CD8-positive, alpha-beta T cell (primary cell): ENCODE measurements at regions of chrX and their contacts with region 1.

Region 1: GRCh38 chrX:132488819-132489577 is at the start of gene MBNL3:
- DNase-seq: peak; percentile 47 to 85 (median 70)
- ATAC-seq: peak; percentile 71
- H3K4me3 ChIP-seq: peak within 1 kb of the TSS; percentile 61 to 77
- H3K4me3 Mint-ChIP-seq: peak within 1 kb of the TSS; percentile 95
- H3K27ac ChIP-seq: peak within 1 kb of the TSS; percentile 66 to 83
- H3K27ac Mint-ChIP-seq: peak within 1 kb of the TSS; percentile 96
- H3K4me1 ChIP-seq: peaks cover 34% of the 10 kb centered on the region
- H3K4me1 Mint-ChIP-seq: peaks cover 52% of the 10 kb centered on the region
- H3K27me3 ChIP-seq: no peaks in the 10 kb centered on the region
- H3K27me3 Mint-ChIP-seq: no peaks in the 10 kb centered on the region
- CTCF ChIP-seq: no peak
- total RNA-seq, gene MBNL3: 18.5 to 22.0 TPM

Region 2: DNA sequence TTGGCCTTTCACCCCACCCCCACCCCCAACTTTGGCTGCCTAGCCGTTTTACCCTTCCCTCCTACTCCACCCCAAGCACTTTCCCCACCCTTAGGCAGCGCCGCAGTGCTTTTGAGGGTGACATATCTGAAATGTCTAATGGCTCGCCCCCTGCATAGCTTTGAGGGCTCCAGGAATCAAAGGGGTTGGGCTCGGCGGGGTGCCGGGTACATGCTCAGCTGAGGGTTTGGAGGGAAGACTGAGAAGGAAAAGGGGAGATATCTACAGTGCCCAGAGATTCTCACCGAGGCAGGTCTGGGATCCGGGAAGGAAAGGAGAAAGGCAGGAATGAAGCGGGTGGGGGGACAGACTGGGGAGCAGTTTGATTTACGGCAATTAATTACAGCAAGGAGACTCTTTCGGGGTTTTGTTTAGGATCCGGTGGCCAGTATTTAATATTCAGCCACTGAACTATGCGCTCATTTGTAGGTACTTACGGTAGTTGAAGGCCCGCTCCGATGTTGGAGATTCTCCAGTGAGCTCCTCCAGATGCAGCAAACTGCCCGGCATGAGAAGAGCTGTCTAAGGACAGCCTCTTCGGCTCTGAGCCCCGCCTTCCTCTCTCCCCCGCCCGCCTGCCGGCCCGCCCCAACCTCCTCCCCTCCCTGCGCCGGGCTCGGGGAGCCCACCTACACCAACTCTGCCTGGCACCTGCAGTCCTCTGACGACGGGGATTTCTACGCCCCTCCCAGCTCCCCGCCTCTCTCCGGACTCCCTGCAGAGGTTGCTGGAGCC is 1200.1 kb before region 1 on chrX and contains the start of gene IGSF1:
- CTCF ChIA-PET with region 1: no interaction called
- POLR2A ChIA-PET with region 1: no interaction called
- intact Hi-C with region 1: no loop called
- DNase-seq: no peak
- ATAC-seq: no peak
- H3K4me3 ChIP-seq: no peak within 1 kb of the TSS
- H3K4me3 Mint-ChIP-seq: no peak within 1 kb of the TSS
- H3K27ac ChIP-seq: no peak within 1 kb of the TSS
- H3K27ac Mint-ChIP-seq: no peak within 1 kb of the TSS
- H3K4me1 ChIP-seq: no peaks in the 10 kb centered on the region
- H3K4me1 Mint-ChIP-seq: no peaks in the 10 kb centered on the region
- H3K27me3 ChIP-seq: no peaks in the 10 kb centered on the region
- H3K27me3 Mint-ChIP-seq: peaks cover 7% of the 10 kb centered on the region
- CTCF ChIP-seq: no peak
- total RNA-seq, gene IGSF1: not detected

Region 3: GRCh38 chrX:132022967-132023895 is 465.8 kb before region 1 on chrX and contains the start of gene STK26:
- CTCF ChIA-PET with region 1: interaction called, 3 read pairs
- POLR2A ChIA-PET with region 1: interaction called, 5 read pairs
- intact Hi-C with region 1: loop called in 1 of 2 experiments (anchors 2 kb)
- DNase-seq: peak; percentile 51 to 88 (median 75)
- ATAC-seq: peak; percentile 87
- H3K4me3 ChIP-seq: peak within 1 kb of the TSS; percentile 84 to 87
- H3K4me3 Mint-ChIP-seq: peak within 1 kb of the TSS; percentile 93
- H3K27ac ChIP-seq: peak within 1 kb of the TSS; percentile 79 to 80
- H3K27ac Mint-ChIP-seq: peak within 1 kb of the TSS; percentile 93
- H3K4me1 ChIP-seq: peaks cover 35% of the 10 kb centered on the region
- H3K4me1 Mint-ChIP-seq: peaks cover 40% of the 10 kb centered on the region
- H3K27me3 ChIP-seq: no peaks in the 10 kb centered on the region
- H3K27me3 Mint-ChIP-seq: no peaks in the 10 kb centered on the region
- CTCF ChIP-seq: no peak
- total RNA-seq, gene STK26: 33.8 to 34.1 TPM

Region 4: GRCh38 chrX:132219343-132219768 is 269.6 kb before region 1 on chrX and contains the start of gene RAP2C:
- CTCF ChIA-PET with region 1: no interaction called
- POLR2A ChIA-PET with region 1: no interaction called
- intact Hi-C with region 1: loop called (anchors 2 kb)
- DNase-seq: peak; percentile 20 to 81 (median 56)
- ATAC-seq: no peak
- H3K4me3 ChIP-seq: peak within 1 kb of the TSS; percentile 81 to 85
- H3K4me3 Mint-ChIP-seq: peak within 1 kb of the TSS; percentile 97
- H3K27ac ChIP-seq: peak within 1 kb of the TSS; percentile 92 to 97
- H3K27ac Mint-ChIP-seq: peak within 1 kb of the TSS; percentile 95
- H3K4me1 ChIP-seq: peaks cover 20% of the 10 kb centered on the region
- H3K4me1 Mint-ChIP-seq: peaks cover 25% of the 10 kb centered on the region
- H3K27me3 ChIP-seq: no peaks in the 10 kb centered on the region
- H3K27me3 Mint-ChIP-seq: no peaks in the 10 kb centered on the region
- CTCF ChIP-seq: no peak
- total RNA-seq, gene RAP2C: 61.0 to 64.9 TPM

Region 5: GRCh38 chrX:132401935-132402334 is 87.1 kb before region 1 on chrX:
- CTCF ChIA-PET with region 1: no interaction called
- POLR2A ChIA-PET with region 1: no interaction called
- intact Hi-C with region 1: loop called in 1 of 2 experiments (anchors 10 kb)
- DNase-seq: no peak
- ATAC-seq: no peak
- H3K4me3 ChIP-seq: no peak overlapping the region
- H3K4me3 Mint-ChIP-seq: no peak overlapping the region
- H3K27ac ChIP-seq: no peak overlapping the region
- H3K27ac Mint-ChIP-seq: no peak overlapping the region
- H3K4me1 ChIP-seq: no peaks in the 10 kb centered on the region
- H3K4me1 Mint-ChIP-seq: no peaks in the 10 kb centered on the region
- H3K27me3 ChIP-seq: no peaks in the 10 kb centered on the region
- H3K27me3 Mint-ChIP-seq: no peaks in the 10 kb centered on the region
- CTCF ChIP-seq: no peak

Region 6: DNA sequence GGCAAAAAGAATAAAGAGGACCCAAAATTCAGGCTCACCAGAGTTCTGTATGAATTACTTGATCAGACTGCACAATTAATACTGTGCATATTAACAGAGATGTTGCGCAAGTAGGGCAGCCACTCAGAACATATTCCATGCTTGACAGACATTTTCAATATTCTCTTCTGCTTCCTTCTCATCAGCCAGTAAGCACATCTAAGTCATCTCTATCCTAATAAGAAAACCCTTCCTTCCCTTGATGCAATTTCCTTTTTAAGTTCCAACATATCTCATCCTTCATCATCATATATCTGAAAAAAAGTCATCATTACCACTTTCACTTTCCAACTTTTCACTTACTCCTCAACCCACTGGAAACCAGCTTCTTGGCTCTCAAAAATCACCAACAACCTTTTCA is 14.5 kb before region 1 on chrX:
- CTCF ChIA-PET with region 1: no interaction called
- POLR2A ChIA-PET with region 1: interaction called, 28 read pairs
- intact Hi-C with region 1: loop called in 1 of 2 experiments (anchors 2 kb)
- DNase-seq: no peak
- ATAC-seq: no peak
- H3K4me3 ChIP-seq: no peak overlapping the region
- H3K4me3 Mint-ChIP-seq: no peak overlapping the region
- H3K27ac ChIP-seq: no peak overlapping the region
- H3K27ac Mint-ChIP-seq: peak overlapping the region; percentile 49
- H3K4me1 ChIP-seq: peaks cover 8% of the 10 kb centered on the region
- H3K4me1 Mint-ChIP-seq: peaks cover 29% of the 10 kb centered on the region
- H3K27me3 ChIP-seq: no peaks in the 10 kb centered on the region
- H3K27me3 Mint-ChIP-seq: no peaks in the 10 kb centered on the region
- CTCF ChIP-seq: no peak

Region 7: DNA sequence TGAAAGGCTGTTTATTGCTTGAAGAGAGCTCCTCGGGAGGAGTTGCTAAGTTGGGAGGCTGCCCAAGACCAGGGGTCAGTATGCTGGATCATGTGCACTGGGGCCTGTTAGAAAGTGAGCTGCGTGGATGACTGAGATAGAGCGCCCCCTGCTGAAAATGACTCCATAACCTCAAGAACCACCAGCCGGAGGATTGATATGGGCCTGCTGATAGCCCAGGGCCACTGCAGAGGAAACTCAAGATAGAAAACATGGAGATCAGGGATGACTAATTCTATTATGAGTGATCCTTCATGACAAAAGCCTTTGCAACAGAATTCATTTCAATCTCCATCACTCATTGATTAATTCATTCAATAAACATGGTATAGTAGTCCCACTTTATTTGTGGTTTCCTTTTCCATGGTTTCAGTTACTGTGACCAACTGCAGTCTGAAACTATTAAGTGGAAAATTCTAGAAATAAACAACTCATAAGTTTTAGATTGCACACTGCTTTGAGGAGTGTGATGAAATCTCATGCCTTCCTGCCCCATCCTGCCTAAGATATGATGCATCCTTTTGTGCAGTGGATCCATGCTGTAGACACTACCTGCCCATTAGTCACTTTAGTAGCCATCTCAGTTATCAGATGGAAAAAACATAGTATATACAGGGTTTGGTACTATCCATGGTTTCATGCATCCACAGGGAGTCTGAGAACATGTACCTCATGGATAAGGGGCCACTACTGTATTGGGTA is 126.6 kb after region 1 on chrX:
- CTCF ChIA-PET with region 1: interaction called, 5 read pairs
- POLR2A ChIA-PET with region 1: no interaction called
- intact Hi-C with region 1: loop called (anchors 5 kb)
- DNase-seq: peak in 8 of 9 experiments; percentile 21 to 64 (median 41)
- ATAC-seq: no peak
- H3K4me3 ChIP-seq: no peak overlapping the region
- H3K4me3 Mint-ChIP-seq: no peak overlapping the region
- H3K27ac ChIP-seq: no peak overlapping the region
- H3K27ac Mint-ChIP-seq: no peak overlapping the region
- H3K4me1 ChIP-seq: no peaks in the 10 kb centered on the region
- H3K4me1 Mint-ChIP-seq: no peaks in the 10 kb centered on the region
- H3K27me3 ChIP-seq: no peaks in the 10 kb centered on the region
- H3K27me3 Mint-ChIP-seq: no peaks in the 10 kb centered on the region
- CTCF ChIP-seq: peak; percentile 15